CD8-positive, alpha-beta T cell (primary cell): ENCODE measurements at regions of chr7 and their contacts with region 1.

Region 1: GRCh38 chr7:73578342-73579127 is at the start of gene TBL2:
- DNase-seq: peak; percentile 96 to 99 (median 99)
- ATAC-seq: peak; percentile 91
- H3K4me3 ChIP-seq: peak within 1 kb of the TSS; percentile 77 to 97
- H3K4me3 Mint-ChIP-seq: peak within 1 kb of the TSS; percentile 94
- H3K27ac ChIP-seq: peak within 1 kb of the TSS; percentile 72 to 95
- H3K27ac Mint-ChIP-seq: peak within 1 kb of the TSS; percentile 97
- H3K4me1 ChIP-seq: peaks cover 21% of the 10 kb centered on the region
- H3K4me1 Mint-ChIP-seq: peaks cover 27% of the 10 kb centered on the region
- H3K27me3 ChIP-seq: no peaks in the 10 kb centered on the region
- H3K27me3 Mint-ChIP-seq: no peaks in the 10 kb centered on the region
- CTCF ChIP-seq: no peak
- total RNA-seq, gene TBL2: 14.9 to 16.7 TPM

Region 2: GRCh38 chr7:73433924-73434700 is 144.4 kb before region 1 on chr7:
- CTCF ChIA-PET with region 1: no interaction called
- POLR2A ChIA-PET with region 1: no interaction called
- intact Hi-C with region 1: loop called in 1 of 2 experiments (anchors 1 kb)
- DNase-seq: peak in 3 of 9 experiments; percentile 22 to 57 (median 52)
- ATAC-seq: peak; percentile 32
- H3K4me3 ChIP-seq: no peak overlapping the region
- H3K4me3 Mint-ChIP-seq: peak overlapping the region; percentile 45
- H3K27ac ChIP-seq: no peak overlapping the region
- H3K27ac Mint-ChIP-seq: no peak overlapping the region
- H3K4me1 ChIP-seq: no peaks in the 10 kb centered on the region
- H3K4me1 Mint-ChIP-seq: peaks cover 5% of the 10 kb centered on the region
- H3K27me3 ChIP-seq: peaks cover 0 to 3% of the 10 kb centered on the region in 2 experiments
- H3K27me3 Mint-ChIP-seq: peaks cover 7% of the 10 kb centered on the region
- CTCF ChIP-seq: no peak

Region 3: DNA sequence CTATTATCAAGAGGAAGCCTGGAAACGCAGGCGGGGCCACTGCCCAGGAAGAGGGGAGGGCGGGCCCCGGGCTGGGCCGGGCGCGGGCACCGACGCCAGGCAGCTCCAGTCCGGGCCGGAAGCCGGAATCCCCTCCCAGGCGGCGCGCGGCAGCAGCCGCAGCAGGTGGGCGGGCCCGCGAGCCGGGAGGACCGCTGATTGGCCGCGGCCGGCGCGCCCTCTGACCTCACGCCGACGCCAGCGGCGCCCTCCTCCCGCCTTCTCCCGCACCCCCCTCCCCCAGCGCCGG is 21.5 kb before region 1 on chr7:
- CTCF ChIA-PET with region 1: interaction called, 5 read pairs
- POLR2A ChIA-PET with region 1: interaction called, 12 read pairs
- intact Hi-C with region 1: loop called (anchors 1 kb)
- DNase-seq: peak; percentile 79 to 96 (median 90)
- ATAC-seq: peak; percentile 91
- H3K4me3 ChIP-seq: peak overlapping the region; percentile 83 to 84
- H3K4me3 Mint-ChIP-seq: peak overlapping the region; percentile 95
- H3K27ac ChIP-seq: peak overlapping the region; percentile 98 to 99
- H3K27ac Mint-ChIP-seq: peak overlapping the region; percentile 99
- H3K4me1 ChIP-seq: peaks cover 23% of the 10 kb centered on the region
- H3K4me1 Mint-ChIP-seq: peaks cover 36% of the 10 kb centered on the region
- H3K27me3 ChIP-seq: no peaks in the 10 kb centered on the region
- H3K27me3 Mint-ChIP-seq: no peaks in the 10 kb centered on the region
- CTCF ChIP-seq: no peak

Region 4: GRCh38 chr7:73667344-73668102 is 89.0 kb after region 1 on chr7 and contains the start of gene VPS37D:
- CTCF ChIA-PET with region 1: no interaction called
- POLR2A ChIA-PET with region 1: no interaction called
- intact Hi-C with region 1: loop called in 1 of 2 experiments (anchors 1 kb)
- DNase-seq: peak; percentile 84 to 98 (median 93)
- ATAC-seq: peak; percentile 92
- H3K4me3 ChIP-seq: peak within 1 kb of the TSS; percentile 37 to 42
- H3K4me3 Mint-ChIP-seq: peak within 1 kb of the TSS; percentile 83
- H3K27ac ChIP-seq: no peak within 1 kb of the TSS
- H3K27ac Mint-ChIP-seq: no peak within 1 kb of the TSS
- H3K4me1 ChIP-seq: peaks cover 11% of the 10 kb centered on the region
- H3K4me1 Mint-ChIP-seq: peaks cover 7% of the 10 kb centered on the region
- H3K27me3 ChIP-seq: peaks cover 0 to 17% of the 10 kb centered on the region in 2 experiments
- H3K27me3 Mint-ChIP-seq: peaks cover 24% of the 10 kb centered on the region
- CTCF ChIP-seq: peak; percentile 62
- total RNA-seq, gene VPS37D: 0.89 to 1.3 TPM

Region 5: GRCh38 chr7:73774923-73775322 is 196.4 kb after region 1 on chr7:
- CTCF ChIA-PET with region 1: no interaction called
- POLR2A ChIA-PET with region 1: no interaction called
- intact Hi-C with region 1: no loop called
- DNase-seq: no peak
- ATAC-seq: no peak
- H3K4me3 ChIP-seq: no peak overlapping the region
- H3K4me3 Mint-ChIP-seq: no peak overlapping the region
- H3K27ac ChIP-seq: no peak overlapping the region
- H3K27ac Mint-ChIP-seq: no peak overlapping the region
- H3K4me1 ChIP-seq: peaks cover 5% of the 10 kb centered on the region
- H3K4me1 Mint-ChIP-seq: peaks cover 6% of the 10 kb centered on the region
- H3K27me3 ChIP-seq: peaks cover 8% of the 10 kb centered on the region in 2 experiments
- H3K27me3 Mint-ChIP-seq: peaks cover 21% of the 10 kb centered on the region
- CTCF ChIP-seq: no peak

Region 6: DNA sequence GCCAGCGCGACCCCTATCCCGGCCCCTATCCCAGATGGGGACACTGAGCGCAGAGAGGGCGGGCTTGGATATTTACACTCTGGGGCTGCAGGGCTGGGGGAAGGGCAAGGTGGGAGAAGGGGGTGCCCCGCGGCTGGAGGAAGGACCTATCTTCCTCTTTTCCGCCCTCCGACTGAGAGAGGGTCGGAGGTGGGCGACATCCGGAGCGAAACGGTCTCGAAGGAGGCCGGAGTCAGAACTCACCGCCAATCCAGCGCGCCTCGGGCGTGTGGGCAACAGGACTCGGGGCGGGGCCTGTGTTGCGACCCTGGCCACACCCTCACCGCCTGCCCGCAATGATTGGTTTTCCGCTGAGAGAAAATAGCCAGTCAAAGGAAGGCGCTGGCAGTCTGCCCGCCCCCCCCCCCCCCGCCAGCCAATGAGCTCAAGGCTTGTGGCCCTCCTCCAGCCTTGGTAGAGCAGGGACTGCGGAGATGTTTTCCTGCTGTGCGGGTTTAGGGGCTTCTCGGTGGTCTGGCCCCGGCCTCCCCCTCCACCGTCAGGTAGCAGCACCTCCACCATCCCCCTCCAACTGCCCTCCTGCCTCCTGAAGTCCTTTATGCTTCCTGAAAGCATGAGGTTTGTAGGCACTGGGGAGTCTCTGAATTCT is 263.8 kb after region 1 on chr7 and contains the start of gene METTL27:
- CTCF ChIA-PET with region 1: no interaction called
- POLR2A ChIA-PET with region 1: no interaction called
- intact Hi-C with region 1: loop called in 1 of 2 experiments (anchors 2 kb)
- DNase-seq: peak; percentile 76 to 94 (median 90)
- ATAC-seq: peak; percentile 98
- H3K4me3 ChIP-seq: peak within 1 kb of the TSS; percentile 58 to 77
- H3K4me3 Mint-ChIP-seq: peak within 1 kb of the TSS; percentile 85
- H3K27ac ChIP-seq: no peak within 1 kb of the TSS
- H3K27ac Mint-ChIP-seq: peak within 1 kb of the TSS; percentile 69
- H3K4me1 ChIP-seq: peaks cover 5% of the 10 kb centered on the region
- H3K4me1 Mint-ChIP-seq: peaks cover 13% of the 10 kb centered on the region
- H3K27me3 ChIP-seq: no peaks in the 10 kb centered on the region
- H3K27me3 Mint-ChIP-seq: no peaks in the 10 kb centered on the region
- CTCF ChIP-seq: no peak
- total RNA-seq, gene METTL27: not detected